Posterior vena cava (tissue), 2 donors: ENCODE measurements at regions of chr10 and their contacts with region 1.

Region 1: GRCh38 chr10:90920986-90921666 is at the start of gene ANKRD1:
- DNase-seq: no peak
- total RNA-seq, gene ANKRD1: 3.5 to 43.7 TPM

Region 2: GRCh38 chr10:90969947-90970684 is 49.0 kb after region 1 on chr10:
- intact Hi-C with region 1: loop called in 1 of 2 experiments (anchors 5 kb)
- DNase-seq: no peak

Region 3: GRCh38 chr10:91034494-91035159 is 113.5 kb after region 1 on chr10:
- intact Hi-C with region 1: loop called in 1 of 2 experiments (anchors 10 kb)
- DNase-seq: peak; percentile 94

Region 4: DNA sequence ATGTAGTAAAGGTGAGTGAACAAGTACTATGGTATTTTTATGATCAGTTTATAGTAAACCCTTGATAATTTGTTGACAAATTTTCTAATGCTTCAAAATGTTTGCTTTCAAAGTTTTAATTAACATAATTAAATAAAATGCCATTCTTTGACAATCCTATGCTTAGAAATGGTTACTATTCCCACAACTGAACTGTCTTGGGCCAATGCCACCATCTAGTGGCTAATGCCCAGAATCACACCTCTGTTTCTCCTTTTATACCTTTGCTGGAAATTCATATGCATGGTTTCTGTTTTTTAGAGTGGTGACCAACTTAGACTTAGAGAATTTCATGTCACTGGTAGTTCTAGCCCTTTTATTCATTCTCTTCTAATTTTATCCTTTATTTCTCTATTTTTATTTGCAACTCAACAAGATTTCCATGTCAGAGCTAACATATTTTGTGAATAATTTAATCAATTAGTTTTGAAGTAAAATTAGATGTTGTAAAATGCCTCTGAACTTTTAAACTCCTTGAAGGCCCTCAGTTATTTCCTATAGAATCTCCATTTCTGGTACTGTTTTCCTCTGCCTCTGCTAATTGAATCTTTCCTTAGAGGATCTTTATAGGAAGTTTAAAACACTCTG is 330.4 kb after region 1 on chr10:
- intact Hi-C with region 1: loop called (anchors 5 to 10 kb)
- DNase-seq: no peak